H1 (cell line): ENCODE measurements at regions of chr3 and their contacts with region 1.

Region 1: DNA sequence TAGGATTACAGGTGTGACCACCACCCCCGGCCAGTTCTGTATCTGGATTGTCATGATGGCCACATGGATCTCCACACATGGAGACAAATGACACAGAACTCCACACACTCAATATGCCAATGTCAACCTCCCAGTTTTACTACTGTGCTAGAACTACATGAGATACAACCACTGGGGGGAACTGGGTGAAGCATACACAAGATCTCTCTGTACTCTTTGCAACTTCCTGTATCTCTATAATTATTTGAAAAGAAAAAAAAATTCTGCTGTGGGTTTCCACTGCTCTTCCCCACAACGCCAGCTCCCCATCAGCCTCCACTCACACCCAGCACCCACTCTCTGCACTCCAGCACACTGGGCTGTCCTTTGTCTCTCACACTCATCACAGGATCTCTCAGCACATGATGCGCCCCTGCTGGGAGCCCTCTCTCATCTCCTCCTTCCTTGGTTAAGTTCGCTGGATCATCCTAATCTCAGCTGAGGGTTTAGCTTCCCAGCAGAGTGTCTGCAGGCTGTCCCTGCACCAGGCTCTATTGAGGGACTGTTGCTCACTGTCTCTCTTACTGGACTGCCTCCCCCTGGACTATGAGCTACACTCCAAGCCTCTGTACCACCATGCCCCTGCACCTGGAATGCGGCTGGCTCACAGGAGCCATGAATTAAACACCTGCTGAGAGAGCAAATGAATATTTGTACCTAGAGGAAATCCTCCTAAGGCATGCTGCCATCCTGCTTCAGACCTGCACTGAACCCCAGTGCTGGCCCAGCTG is 10.7 kb upstream of the RAB43 start:
- DNase-seq: no peak
- H3K4me3 ChIP-seq: no peak overlapping the region
- H3K27ac ChIP-seq: no peak overlapping the region
- H3K4me1 ChIP-seq: no peaks in the 10 kb centered on the region
- H3K27me3 ChIP-seq: no peaks in the 10 kb centered on the region
- CTCF ChIP-seq: no peak
- EP300 ChIP-seq: no peak
- POLR2A ChIP-seq: no peak
- RAD21 ChIP-seq: no peak

Region 2: GRCh38 chr3:129120254-129121004 is 11.9 kb before region 1 on chr3:
- CTCF ChIA-PET with region 1: interaction called, 17 read pairs
- POLR2A ChIA-PET with region 1: interaction called, 5 read pairs
- DNase-seq: peak; percentile 62 to 83
- H3K4me3 ChIP-seq: peak overlapping the region; percentile 68 to 82 (median 74)
- H3K27ac ChIP-seq: peak overlapping the region; percentile 86
- H3K4me1 ChIP-seq: peaks cover 12 to 21% (median 16%) of the 10 kb centered on the region in 4 experiments
- H3K27me3 ChIP-seq: no peaks in the 10 kb centered on the region
- CTCF ChIP-seq: peak in 2 of 3 experiments; percentile 7 to 23; a peak in 2 of 4 replicates
- EP300 ChIP-seq: no peak
- POLR2A ChIP-seq: peak; percentile 63 to 77
- RAD21 ChIP-seq: no peak; a peak in 1 of 4 replicates